Aorta (tissue), 5 donors: ENCODE measurements at regions of chr7 and their contacts with region 1.

Region 1: DNA sequence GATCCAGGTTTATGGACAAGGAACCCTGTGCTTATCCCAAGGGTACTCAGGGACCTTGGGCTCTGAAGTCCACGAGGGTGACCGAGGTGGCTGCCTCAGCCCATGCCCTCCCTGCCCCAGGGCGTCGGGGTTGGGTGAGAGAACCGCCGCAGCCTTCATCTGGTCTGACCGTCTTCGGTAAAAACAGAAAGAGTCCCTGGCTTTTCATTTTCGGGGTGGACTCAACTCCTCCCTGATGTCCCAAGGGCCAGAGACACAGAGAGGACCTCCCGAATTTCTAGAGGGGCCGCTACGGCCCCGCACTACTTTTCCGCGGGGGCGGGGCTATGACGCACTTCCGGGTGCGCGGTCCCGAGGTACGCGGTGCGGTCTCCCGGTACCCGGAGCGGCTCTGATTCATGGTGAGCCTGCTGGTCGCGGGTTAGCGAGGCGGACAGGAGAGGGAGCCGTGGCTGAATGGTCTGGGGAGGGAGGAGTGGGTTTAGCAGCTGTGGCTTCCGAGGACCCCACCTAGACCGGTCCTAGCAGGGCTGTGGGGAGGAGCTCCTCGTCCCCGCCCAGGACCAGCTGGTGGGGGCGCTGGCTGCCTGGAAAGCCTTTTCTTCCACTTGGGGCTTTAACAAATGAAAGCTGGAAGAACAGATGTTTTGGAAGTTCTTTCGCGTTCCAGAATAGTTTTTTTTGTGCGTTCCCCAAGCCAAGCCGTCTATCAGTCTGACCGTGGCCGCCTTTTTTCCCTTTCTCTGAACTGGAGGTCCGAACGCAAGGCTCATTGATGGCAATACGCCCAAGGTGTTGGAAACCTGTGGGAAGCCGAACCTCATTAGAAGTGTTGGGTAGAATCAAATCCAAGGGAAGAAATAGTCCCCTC is at the start of gene ZSCAN21:
- DNase-seq: peak; percentile 90 to 97
- ATAC-seq: peak; percentile 97
- H3K4me3 ChIP-seq: peak within 1 kb of the TSS; percentile 72 to 80
- H3K27ac ChIP-seq: peak within 1 kb of the TSS; percentile 28 to 92
- H3K4me1 ChIP-seq: no peaks in the 10 kb centered on the region
- H3K27me3 ChIP-seq: no peaks in the 10 kb centered on the region
- total RNA-seq, gene ZSCAN21: 7.9 to 10.7 TPM

Region 2: DNA sequence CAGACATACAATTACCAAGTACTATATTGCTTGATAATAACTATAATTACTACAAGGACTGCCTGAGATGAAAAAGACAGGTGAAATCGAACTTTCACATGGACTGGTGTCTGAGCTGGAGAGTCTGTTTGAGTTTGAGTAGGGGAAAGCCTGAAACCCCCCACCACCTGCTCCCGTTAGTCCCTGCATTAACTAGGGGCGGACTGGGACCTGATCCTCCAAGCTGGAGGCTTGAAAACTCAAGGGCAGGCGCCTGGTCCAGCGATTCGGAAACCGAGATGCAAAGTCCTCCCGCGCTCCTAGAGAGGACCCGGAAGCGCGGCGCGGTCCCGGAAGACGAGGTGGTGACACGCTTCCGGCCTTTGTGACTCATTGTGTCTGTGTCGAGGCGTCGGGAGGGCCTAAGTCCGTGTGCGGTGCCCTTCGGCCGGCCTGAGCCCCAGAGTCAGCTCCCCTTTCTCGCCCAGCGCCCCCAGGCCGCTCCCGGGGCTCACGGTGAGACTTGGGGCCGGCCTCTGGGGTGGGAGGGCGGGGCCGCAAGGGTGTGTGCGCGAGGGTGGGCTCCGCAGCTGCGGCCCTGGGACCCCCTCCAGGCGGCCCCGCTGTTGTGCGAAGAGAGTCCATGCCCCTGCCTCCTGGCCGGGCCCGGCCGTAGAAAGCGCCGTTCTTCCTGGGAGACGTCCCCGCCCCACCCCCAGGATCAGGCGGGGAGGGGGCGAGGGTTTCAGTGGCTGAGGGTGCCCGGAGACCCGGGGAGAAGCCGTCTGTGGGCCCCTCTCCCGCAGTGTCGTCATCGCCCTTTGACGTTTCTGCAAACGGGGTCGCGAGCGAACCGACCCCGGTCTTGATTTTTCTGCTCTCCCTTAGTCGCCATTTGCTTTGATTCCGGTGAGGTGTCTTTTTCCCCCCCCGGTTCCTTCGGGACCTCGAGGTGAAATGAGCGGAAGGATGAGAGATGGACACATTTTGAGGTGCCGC is 34.2 kb before region 1 on chr7 and contains the start of gene ZKSCAN1:
- intact Hi-C with region 1: loop called in 1 of 2 experiments (anchors 1 kb)
- DNase-seq: peak; percentile 93 to 94
- ATAC-seq: peak; percentile 98
- H3K4me3 ChIP-seq: peak within 1 kb of the TSS; percentile 94 to 98
- H3K27ac ChIP-seq: peak within 1 kb of the TSS; percentile 81 to 95
- H3K4me1 ChIP-seq: peaks cover 0 to 6% of the 10 kb centered on the region in 2 donors
- H3K27me3 ChIP-seq: no peaks in the 10 kb centered on the region
- total RNA-seq, gene ZKSCAN1: 57.9 to 80.9 TPM

Region 3: DNA sequence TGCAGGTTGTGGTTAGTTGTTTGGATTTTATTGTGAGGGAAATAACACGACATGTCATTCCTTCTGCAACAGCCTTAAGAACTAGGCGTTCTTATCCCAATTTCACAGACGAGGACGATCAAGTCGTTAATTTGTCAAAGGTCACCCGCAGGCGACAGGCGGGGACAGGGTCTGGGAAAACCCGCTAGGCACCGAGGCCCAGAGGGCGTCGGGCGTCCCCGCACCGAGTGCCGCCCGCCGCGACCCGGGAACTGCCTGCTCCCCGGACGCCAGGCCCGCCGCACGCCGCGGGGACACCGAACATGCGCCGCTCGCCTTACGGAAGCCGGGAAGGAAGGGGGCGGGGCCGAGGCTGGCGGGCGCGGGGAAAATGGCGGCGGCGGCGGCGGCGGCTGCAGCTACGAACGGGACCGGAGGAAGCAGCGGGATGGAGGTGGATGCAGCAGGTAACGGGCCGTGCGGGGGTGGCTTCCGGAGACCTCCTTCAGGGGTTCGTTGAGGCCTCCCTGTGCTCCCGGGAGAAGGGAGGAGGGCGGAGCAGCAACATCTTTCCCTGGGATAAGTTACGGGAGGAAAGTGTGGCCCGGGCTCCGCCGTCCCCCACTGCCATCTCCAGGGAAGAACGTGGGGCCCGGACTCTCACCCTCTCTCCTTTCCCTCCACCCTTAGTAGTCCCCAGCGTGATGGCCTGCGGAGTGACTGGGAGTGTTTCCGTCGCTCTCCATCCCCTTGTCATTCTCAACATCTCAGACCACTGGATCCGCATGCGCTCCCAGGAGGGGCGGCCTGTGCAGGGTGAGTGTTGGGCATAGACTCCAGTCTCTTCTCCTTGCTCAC is 39.2 kb after region 1 on chr7 and contains the start of gene COPS6:
- intact Hi-C with region 1: loop called in 1 of 2 experiments (anchors 5 kb)
- DNase-seq: peak; percentile 91 to 96
- ATAC-seq: peak; percentile 93
- H3K4me3 ChIP-seq: peak within 1 kb of the TSS; percentile 20 to 64
- H3K27ac ChIP-seq: peak within 1 kb of the TSS in 1 of 2 donors; percentile 4
- H3K4me1 ChIP-seq: no peaks in the 10 kb centered on the region
- H3K27me3 ChIP-seq: no peaks in the 10 kb centered on the region
- total RNA-seq, gene COPS6: 79.7 to 81.0 TPM

Region 4: GRCh38 chr7:100101016-100101862 is 51.6 kb after region 1 on chr7 and contains the starts of genes AP4M1 and MCM7:
- intact Hi-C with region 1: loop called in 1 of 2 experiments (anchors 1 kb)
- DNase-seq: peak; percentile 99 to 100
- ATAC-seq: peak; percentile 97
- H3K4me3 ChIP-seq: peak within 1 kb of the TSS; percentile 81 to 88
- H3K27ac ChIP-seq: peak within 1 kb of the TSS in 1 of 2 donors; percentile 49
- H3K4me1 ChIP-seq: no peaks in the 10 kb centered on the region
- H3K27me3 ChIP-seq: no peaks in the 10 kb centered on the region
- total RNA-seq, gene AP4M1: 14.9 to 20.5 TPM
- total RNA-seq, gene MCM7: 27.1 to 45.8 TPM

Region 5: DNA sequence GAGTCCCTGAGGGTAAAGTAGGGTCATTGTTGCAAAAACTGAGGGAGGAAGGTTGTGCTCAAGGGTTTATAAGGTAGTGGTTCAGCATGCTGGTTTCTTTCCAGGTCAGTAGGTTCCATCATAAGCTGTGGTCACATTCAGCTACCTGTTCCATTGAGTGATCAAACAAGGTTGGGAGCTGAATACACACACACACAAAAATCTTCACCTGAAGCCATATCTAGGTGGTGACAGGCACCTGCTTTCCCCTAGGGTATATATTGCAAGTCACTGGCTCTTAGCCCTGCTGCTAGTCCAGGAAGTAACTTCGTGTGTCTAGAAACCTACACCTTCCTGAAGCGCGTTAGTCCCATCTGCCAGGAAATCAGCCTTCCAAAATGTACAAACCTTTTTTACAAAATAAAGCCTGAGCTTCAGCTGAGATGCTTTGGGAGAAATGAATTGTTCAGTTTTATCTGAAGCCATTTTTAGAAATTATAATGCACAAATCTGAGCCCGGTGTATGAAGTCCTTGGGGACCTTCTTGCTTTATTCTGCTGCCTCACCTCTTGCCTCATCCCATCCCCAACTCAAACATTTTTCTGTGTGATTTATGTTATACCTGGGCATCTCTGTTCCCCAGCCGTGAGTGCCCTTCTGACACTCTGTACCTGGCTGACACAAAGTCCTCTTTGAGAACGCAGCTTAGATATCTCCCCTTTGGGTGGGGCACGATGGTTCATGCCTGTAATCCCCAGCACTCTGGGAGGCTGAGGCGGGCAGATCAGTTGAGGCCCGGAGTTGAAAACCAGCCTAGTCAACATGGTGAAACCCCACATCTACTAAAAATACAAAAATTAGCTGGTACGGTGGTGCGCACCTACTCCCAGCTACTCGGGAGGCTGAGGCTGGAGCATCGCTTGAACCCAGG is 88.4 kb after region 1 on chr7:
- intact Hi-C with region 1: no loop called
- DNase-seq: no peak
- ATAC-seq: no peak
- H3K4me3 ChIP-seq: no peak overlapping the region
- H3K27ac ChIP-seq: no peak overlapping the region
- H3K4me1 ChIP-seq: no peaks in the 10 kb centered on the region
- H3K27me3 ChIP-seq: no peaks in the 10 kb centered on the region